PC-3 (cell line): ENCODE measurements at regions of chr16 and their contacts with region 1.

Region 1: DNA sequence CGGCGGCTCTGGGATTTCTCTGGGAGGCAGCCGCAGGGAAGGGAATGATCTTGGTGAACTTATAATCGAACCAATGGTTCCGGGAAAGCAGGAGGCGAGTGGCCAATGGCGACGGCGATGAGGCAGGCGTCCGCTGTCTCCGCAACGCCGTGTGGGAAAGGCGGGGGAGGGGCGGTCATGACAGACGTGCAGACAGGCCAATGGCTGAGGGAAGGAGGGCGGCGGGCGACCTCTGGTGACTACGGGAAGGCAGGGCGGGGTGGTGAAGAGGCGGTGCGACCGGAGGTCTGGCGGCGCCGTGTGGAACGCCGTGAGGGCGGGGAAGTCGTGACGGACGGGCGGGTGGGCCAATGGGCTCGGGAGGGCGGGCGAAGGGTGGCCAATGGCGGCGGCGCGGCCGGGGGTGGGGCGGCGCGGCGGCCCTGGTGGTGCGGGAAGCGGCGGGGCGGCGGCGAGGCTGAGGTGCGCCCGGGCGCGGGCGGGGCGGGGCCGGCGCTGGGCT is at the start of gene RAB40C:
- DNase-seq: peak; percentile 92
- ATAC-seq: peak; percentile 79
- H3K4me3 ChIP-seq: peak within 1 kb of the TSS; percentile 91
- H3K27ac ChIP-seq: peak within 1 kb of the TSS; percentile 77
- H3K4me1 ChIP-seq: peaks cover 28% of the 10 kb centered on the region
- H3K27me3 ChIP-seq: no peaks in the 10 kb centered on the region
- CTCF ChIP-seq: no peak
- total RNA-seq, gene RAB40C: 19.5 and 27.0 TPM in 2 replicates

Region 2: DNA sequence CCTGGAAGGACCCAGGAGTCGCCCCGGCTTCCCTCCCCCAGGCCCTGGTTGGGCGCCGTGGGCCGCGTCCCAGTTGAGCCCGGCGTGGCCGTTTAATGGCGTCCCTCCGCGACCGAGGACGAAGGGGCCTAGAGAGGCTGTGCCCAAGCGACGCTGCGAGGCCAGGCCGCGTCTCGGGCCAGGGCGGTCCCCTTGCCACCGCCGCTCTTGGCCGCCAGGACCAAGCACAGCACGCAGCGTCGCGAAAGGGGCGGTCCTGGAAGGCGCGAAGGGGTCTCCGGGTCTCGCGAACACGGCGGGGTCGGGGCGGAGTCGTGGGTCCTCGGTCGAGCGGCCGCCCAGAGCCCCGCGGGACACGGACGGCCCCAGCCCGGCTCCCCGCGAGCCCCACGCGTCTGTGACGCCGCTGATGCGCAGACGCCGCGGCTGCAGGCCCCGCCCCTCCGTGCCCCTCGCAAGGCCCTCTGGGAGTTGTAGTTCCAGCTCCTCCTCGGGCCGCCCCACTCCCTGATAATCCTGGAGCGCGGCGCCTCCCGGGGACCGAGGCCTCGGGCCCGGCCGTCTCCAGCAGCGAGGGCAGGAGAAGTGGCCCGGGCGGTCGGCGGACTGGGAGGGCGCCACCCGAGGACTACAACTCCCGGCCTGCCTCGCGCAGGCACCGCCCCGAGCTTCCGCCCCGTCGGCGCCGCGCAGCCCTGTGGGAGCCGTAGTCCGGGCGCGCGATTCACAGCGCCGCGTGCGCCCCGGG is 62.5 kb before region 1 on chr16 and contains the start of gene CAPN15:
- CTCF ChIA-PET with region 1: no interaction called
- POLR2A ChIA-PET with region 1: no interaction called
- intact Hi-C with region 1: loop called (anchors 10 kb)
- DNase-seq: peak; percentile 69
- ATAC-seq: peak; percentile 62
- H3K4me3 ChIP-seq: peak within 1 kb of the TSS; percentile 94
- H3K27ac ChIP-seq: peak within 1 kb of the TSS; percentile 84
- H3K4me1 ChIP-seq: peaks cover 26% of the 10 kb centered on the region
- H3K27me3 ChIP-seq: no peaks in the 10 kb centered on the region
- CTCF ChIP-seq: no peak
- total RNA-seq, gene CAPN15: 60.4 and 78.1 TPM in 2 replicates

Region 3: DNA sequence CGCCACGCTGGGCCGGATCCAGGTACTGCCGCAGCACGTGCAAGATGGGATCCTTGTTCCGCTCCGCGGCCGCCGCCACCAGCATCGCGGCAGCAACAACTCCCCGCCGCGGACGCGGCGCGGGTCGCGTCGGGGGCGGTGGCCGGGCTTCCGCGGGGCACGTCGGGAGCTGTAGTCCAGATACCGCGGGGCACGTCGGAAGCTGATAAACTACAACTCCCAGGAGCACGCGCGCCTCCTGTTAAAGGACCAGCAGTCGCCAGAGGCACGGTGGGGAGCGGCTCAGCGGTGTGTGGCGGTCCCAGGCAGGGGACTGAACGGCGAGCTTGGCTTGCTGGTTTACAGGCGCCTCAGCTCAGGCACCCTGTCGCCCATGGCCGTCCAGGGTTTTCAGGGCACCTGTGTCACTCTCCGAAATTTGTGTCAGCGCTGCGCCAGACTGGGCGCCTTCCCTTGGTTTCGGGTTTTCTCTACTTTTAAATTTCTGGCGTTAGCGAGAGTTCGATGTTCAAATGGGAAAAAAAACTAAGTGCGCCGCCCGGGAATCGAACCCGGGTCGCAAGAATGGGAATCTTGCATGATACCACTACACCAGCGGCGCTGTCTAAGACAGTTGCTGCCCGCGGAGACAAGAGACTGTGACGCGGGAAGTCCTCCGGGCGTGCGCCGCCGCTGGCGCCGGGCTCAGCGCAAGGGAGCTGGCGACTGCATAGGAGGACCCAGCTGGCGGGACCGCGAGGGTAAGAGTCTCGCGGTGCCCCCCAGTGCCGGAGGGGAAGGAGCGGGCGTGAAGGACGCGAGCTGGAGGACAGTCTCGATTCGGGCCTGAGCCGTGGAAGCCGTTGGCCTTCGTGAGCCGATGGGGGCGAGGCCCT is 46.7 kb after region 1 on chr16 and contains the start of gene METTL26:
- CTCF ChIA-PET with region 1: interaction called, 3 read pairs
- POLR2A ChIA-PET with region 1: no interaction called
- intact Hi-C with region 1: loop called (anchors 5 kb)
- DNase-seq: peak; percentile 88
- ATAC-seq: peak; percentile 88
- H3K4me3 ChIP-seq: peak within 1 kb of the TSS; percentile 90
- H3K27ac ChIP-seq: peak within 1 kb of the TSS; percentile 54
- H3K4me1 ChIP-seq: peaks cover 3% of the 10 kb centered on the region; the same call in 1 of the 2 replicates
- H3K27me3 ChIP-seq: no peaks in the 10 kb centered on the region
- CTCF ChIP-seq: no peak
- total RNA-seq, gene METTL26: 179 and 207 TPM in 2 replicates